PC-3 (cell line): ENCODE measurements at regions of chr9 and their contacts with region 1.

Region 1: GRCh38 chr9:116589392-116590354 is 97.4 kb upstream of the TRIM32 start:
- DNase-seq: peak; percentile 76
- ATAC-seq: peak; percentile 91
- H3K4me3 ChIP-seq: no peak overlapping the region
- H3K27ac ChIP-seq: no peak overlapping the region
- H3K4me1 ChIP-seq: no peaks in the 10 kb centered on the region
- H3K27me3 ChIP-seq: no peaks in the 10 kb centered on the region
- CTCF ChIP-seq: peak; percentile 81

Region 2: GRCh38 chr9:116646661-116647512 is 57.2 kb after region 1 on chr9:
- CTCF ChIA-PET with region 1: interaction called, 4 read pairs
- POLR2A ChIA-PET with region 1: no interaction called
- intact Hi-C with region 1: loop called (anchors 1 kb)
- DNase-seq: peak; percentile 51
- ATAC-seq: peak; percentile 70
- H3K4me3 ChIP-seq: no peak overlapping the region
- H3K27ac ChIP-seq: no peak overlapping the region
- H3K4me1 ChIP-seq: no peaks in the 10 kb centered on the region
- H3K27me3 ChIP-seq: no peaks in the 10 kb centered on the region
- CTCF ChIP-seq: peak; percentile 63